CD8-positive, alpha-beta T cell (primary cell): ENCODE measurements at regions of chr3 and their contacts with region 1.

Region 1: GRCh38 chr3:150408221-150409102 is at the start of gene TSC22D2:
- DNase-seq: peak; percentile 95 to 99 (median 97)
- ATAC-seq: peak; percentile 70
- H3K4me3 ChIP-seq: peak within 1 kb of the TSS; percentile 85 to 90
- H3K4me3 Mint-ChIP-seq: peak within 1 kb of the TSS; percentile 89
- H3K27ac ChIP-seq: peak within 1 kb of the TSS; percentile 92 to 96
- H3K27ac Mint-ChIP-seq: peak within 1 kb of the TSS; percentile 99
- H3K4me1 ChIP-seq: peaks cover 16% of the 10 kb centered on the region
- H3K4me1 Mint-ChIP-seq: peaks cover 33% of the 10 kb centered on the region
- H3K27me3 ChIP-seq: no peaks in the 10 kb centered on the region
- H3K27me3 Mint-ChIP-seq: no peaks in the 10 kb centered on the region
- CTCF ChIP-seq: no peak
- total RNA-seq, gene TSC22D2: 49.3 to 51.7 TPM

Region 2: DNA sequence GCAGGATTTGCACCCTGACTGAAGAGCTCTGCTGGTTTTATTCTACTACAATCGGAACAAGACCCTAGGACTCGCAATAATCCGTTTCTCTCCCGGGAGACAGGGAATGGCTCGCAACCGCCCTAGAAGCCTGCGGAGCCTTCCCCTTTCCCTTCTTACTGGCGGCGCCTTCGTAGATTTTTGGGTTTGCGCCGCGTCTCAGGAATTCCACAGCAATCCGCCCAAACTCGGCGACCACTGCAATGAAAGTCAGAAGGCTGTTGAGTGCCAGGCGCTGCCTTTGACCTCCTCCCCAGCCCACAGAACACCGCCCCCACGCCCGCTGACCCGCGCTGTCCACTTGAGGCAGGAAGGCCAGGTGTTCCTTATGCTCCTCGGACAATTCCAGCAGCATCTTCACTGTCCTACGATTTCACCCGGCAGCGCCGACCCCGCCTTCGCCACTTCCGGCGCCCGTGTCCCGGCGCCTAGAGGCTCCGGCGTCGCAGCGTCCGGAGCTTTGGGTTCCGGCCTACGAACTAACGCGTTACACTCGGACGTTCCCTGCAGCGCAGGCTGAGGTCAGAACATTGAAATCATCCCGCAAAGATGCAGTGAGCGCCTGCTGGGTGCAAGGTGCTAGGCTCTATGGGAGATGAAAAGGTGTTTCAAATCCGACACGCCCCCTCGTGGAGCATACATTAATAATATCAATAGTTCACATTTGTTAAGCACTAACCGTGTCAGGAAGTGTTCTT is 656.2 kb before region 1 on chr3 and contains the start of gene COMMD2:
- CTCF ChIA-PET with region 1: no interaction called
- POLR2A ChIA-PET with region 1: no interaction called
- intact Hi-C with region 1: loop called in 1 of 2 experiments (anchors 1 kb)
- DNase-seq: peak; percentile 49 to 88 (median 68)
- ATAC-seq: peak; percentile 89
- H3K4me3 ChIP-seq: peak within 1 kb of the TSS; percentile 80 to 82
- H3K4me3 Mint-ChIP-seq: peak within 1 kb of the TSS; percentile 97
- H3K27ac ChIP-seq: peak within 1 kb of the TSS; percentile 74 to 79
- H3K27ac Mint-ChIP-seq: peak within 1 kb of the TSS; percentile 97
- H3K4me1 ChIP-seq: peaks cover 20% of the 10 kb centered on the region
- H3K4me1 Mint-ChIP-seq: peaks cover 45% of the 10 kb centered on the region
- H3K27me3 ChIP-seq: no peaks in the 10 kb centered on the region
- H3K27me3 Mint-ChIP-seq: peaks cover 2% of the 10 kb centered on the region
- CTCF ChIP-seq: peak; percentile 55
- total RNA-seq, gene COMMD2: 59.1 to 59.6 TPM

Region 3: GRCh38 chr3:150286390-150287147 is 121.9 kb before region 1 on chr3:
- CTCF ChIA-PET with region 1: interaction called, 6 read pairs
- POLR2A ChIA-PET with region 1: no interaction called
- intact Hi-C with region 1: loop called in 1 of 2 experiments (anchors 5 kb)
- DNase-seq: peak in 4 of 9 experiments; percentile 8 to 68 (median 34)
- ATAC-seq: peak; percentile 83
- H3K4me3 ChIP-seq: no peak overlapping the region
- H3K4me3 Mint-ChIP-seq: no peak overlapping the region
- H3K27ac ChIP-seq: no peak overlapping the region
- H3K27ac Mint-ChIP-seq: no peak overlapping the region
- H3K4me1 ChIP-seq: no peaks in the 10 kb centered on the region
- H3K4me1 Mint-ChIP-seq: no peaks in the 10 kb centered on the region
- H3K27me3 ChIP-seq: peaks cover 2% of the 10 kb centered on the region in 2 experiments
- H3K27me3 Mint-ChIP-seq: peaks cover 13% of the 10 kb centered on the region
- CTCF ChIP-seq: peak; percentile 65

Region 4: GRCh38 chr3:150421799-150422548 is 13.5 kb after region 1 on chr3:
- CTCF ChIA-PET with region 1: interaction called, 6 read pairs
- POLR2A ChIA-PET with region 1: interaction called, 9 read pairs
- intact Hi-C with region 1: loop called in 1 of 2 experiments (anchors 1 kb)
- DNase-seq: peak in 1 of 9 experiments; percentile 13
- ATAC-seq: peak; percentile 36
- H3K4me3 ChIP-seq: no peak overlapping the region
- H3K4me3 Mint-ChIP-seq: no peak overlapping the region
- H3K27ac ChIP-seq: no peak overlapping the region
- H3K27ac Mint-ChIP-seq: no peak overlapping the region
- H3K4me1 ChIP-seq: peaks cover 18% of the 10 kb centered on the region
- H3K4me1 Mint-ChIP-seq: peaks cover 66% of the 10 kb centered on the region
- H3K27me3 ChIP-seq: no peaks in the 10 kb centered on the region
- H3K27me3 Mint-ChIP-seq: no peaks in the 10 kb centered on the region
- CTCF ChIP-seq: no peak

Region 5: GRCh38 chr3:150472421-150472820 is 64.0 kb after region 1 on chr3:
- CTCF ChIA-PET with region 1: no interaction called
- POLR2A ChIA-PET with region 1: no interaction called
- intact Hi-C with region 1: no loop called
- DNase-seq: no peak
- ATAC-seq: no peak
- H3K4me3 ChIP-seq: no peak overlapping the region
- H3K4me3 Mint-ChIP-seq: no peak overlapping the region
- H3K27ac ChIP-seq: no peak overlapping the region
- H3K27ac Mint-ChIP-seq: no peak overlapping the region
- H3K4me1 ChIP-seq: no peaks in the 10 kb centered on the region
- H3K4me1 Mint-ChIP-seq: peaks cover 5% of the 10 kb centered on the region
- H3K27me3 ChIP-seq: no peaks in the 10 kb centered on the region
- H3K27me3 Mint-ChIP-seq: no peaks in the 10 kb centered on the region
- CTCF ChIP-seq: no peak

Region 6: DNA sequence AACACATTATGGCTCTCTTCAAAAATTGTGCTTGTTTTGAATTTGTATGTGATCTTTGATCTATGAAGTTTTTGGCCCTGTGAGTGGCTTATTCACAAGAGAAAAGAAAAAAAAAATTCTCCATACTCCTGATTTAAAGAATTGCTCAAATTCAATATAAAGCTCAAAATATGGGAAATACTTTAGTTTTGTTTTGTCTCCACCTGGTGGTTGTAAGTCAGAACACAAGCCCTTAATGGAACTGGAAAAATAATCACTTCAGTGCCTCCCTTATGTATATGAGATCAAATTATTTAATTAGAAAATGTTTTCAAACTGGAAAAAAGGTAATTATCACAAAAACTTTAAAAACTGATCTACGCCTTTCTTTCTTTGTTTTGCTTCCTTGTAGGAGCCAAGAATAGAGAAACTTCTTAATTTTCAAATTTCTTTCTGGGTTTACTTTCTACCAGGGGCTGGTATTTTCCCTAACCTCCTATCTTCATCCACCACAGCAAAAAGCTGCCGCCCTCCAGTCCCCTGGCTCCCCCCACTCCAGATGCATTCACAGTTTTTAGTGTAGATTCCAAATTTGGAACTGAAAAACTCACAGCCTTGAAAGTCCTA is 87.2 kb after region 1 on chr3:
- CTCF ChIA-PET with region 1: interaction called, 13 read pairs
- POLR2A ChIA-PET with region 1: interaction called, 9 read pairs
- intact Hi-C with region 1: loop called (anchors 1 kb)
- DNase-seq: peak in 3 of 9 experiments; percentile 23 to 70 (median 62)
- ATAC-seq: peak; percentile 52
- H3K4me3 ChIP-seq: no peak overlapping the region
- H3K4me3 Mint-ChIP-seq: no peak overlapping the region
- H3K27ac ChIP-seq: no peak overlapping the region
- H3K27ac Mint-ChIP-seq: no peak overlapping the region
- H3K4me1 ChIP-seq: no peaks in the 10 kb centered on the region
- H3K4me1 Mint-ChIP-seq: no peaks in the 10 kb centered on the region
- H3K27me3 ChIP-seq: no peaks in the 10 kb centered on the region
- H3K27me3 Mint-ChIP-seq: no peaks in the 10 kb centered on the region
- CTCF ChIP-seq: peak; percentile 81

Region 7: DNA sequence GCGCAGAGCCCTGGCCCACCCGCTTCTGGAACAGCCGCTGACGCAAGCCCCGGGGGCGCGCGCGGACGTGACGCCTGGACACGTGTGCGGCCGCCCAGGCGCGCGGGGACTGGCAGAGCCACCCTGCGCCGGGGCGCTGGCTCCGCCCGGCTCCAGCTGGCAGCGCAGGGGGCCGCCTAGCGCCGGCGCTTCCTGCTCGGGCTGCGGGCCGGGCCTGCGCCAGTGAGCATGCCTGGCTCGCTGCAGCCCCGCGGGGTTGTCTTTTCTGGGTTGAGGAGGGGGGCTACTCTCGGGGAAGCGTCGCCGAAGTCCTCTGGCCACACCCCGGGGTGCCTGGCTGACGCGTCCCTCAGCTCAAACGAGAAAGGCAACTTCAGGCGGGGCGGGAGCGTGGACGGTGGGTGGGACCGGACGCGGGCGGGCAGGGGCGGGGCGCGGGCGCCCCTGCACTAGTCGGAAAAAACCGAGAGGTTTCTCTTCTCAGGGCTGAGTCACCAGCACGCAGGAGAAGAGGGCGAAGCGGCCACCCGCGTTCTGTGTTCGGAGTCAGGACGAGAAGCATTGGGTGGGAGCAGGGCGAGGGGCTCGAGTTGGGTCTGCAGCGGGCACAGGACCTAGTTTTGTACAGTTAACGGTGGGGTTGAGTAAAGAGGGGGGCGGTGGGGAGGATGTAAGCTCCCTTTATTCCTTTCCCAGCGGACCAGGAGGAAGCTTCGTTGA is 354.8 kb after region 1 on chr3 and contains the start of gene SIAH2:
- CTCF ChIA-PET with region 1: no interaction called
- POLR2A ChIA-PET with region 1: interaction called, 39 read pairs
- intact Hi-C with region 1: loop called (anchors 1 to 2 kb)
- DNase-seq: peak; percentile 85 to 98 (median 92)
- ATAC-seq: peak; percentile 81
- H3K4me3 ChIP-seq: peak within 1 kb of the TSS; percentile 81 to 87
- H3K4me3 Mint-ChIP-seq: peak within 1 kb of the TSS; percentile 94
- H3K27ac ChIP-seq: peak within 1 kb of the TSS; percentile 97 to 98
- H3K27ac Mint-ChIP-seq: peak within 1 kb of the TSS; percentile 99
- H3K4me1 ChIP-seq: peaks cover 39% of the 10 kb centered on the region
- H3K4me1 Mint-ChIP-seq: peaks cover 43% of the 10 kb centered on the region
- H3K27me3 ChIP-seq: no peaks in the 10 kb centered on the region
- H3K27me3 Mint-ChIP-seq: no peaks in the 10 kb centered on the region
- CTCF ChIP-seq: no peak
- total RNA-seq, gene SIAH2: 57.0 to 65.4 TPM